Adrenal gland (tissue), 19 donors: ENCODE measurements at regions of chr10 and their contacts with region 1.

Region 1: DNA sequence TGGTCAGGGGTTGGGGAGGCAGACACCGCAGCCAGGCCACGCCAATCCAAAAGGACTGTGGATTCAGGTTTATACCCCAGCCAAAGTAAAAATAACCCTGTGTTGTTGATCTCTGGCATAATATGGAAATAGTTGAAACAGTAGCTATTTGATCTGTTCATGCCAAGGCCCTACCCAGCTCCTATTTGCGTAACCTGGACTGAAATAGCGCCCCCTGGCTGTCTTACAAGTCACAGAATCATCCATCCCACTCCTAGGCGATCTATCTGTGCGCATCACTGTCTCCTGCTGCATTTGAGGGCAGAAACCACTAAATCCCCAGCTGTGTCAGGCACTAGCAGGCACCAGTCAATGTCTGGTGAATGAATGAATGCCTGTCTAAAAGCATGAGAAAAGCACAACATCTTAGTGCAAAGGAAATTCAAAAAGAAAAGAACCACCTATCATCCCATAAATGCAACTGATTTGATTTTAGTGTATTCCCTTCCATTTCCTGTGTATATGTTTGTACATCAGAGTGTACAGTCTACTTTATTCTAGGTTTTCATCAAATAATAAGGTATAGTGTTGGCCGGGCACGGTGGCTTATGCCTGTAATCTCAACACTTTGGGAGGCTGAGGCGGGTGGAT is 160.0 kb downstream of the SLIT1 start:
- DNase-seq: peak; percentile 49 to 85 (median 58)
- H3K4me3 ChIP-seq: no peak overlapping the region
- H3K27ac ChIP-seq: no peak overlapping the region
- H3K4me1 ChIP-seq: peaks cover 14 to 25% of the 10 kb centered on the region in 2 donors
- H3K27me3 ChIP-seq: no peaks in the 10 kb centered on the region
- CTCF ChIP-seq: peak; percentile 30 to 74 (median 62)
- POLR2A ChIP-seq: no peak

Region 2: DNA sequence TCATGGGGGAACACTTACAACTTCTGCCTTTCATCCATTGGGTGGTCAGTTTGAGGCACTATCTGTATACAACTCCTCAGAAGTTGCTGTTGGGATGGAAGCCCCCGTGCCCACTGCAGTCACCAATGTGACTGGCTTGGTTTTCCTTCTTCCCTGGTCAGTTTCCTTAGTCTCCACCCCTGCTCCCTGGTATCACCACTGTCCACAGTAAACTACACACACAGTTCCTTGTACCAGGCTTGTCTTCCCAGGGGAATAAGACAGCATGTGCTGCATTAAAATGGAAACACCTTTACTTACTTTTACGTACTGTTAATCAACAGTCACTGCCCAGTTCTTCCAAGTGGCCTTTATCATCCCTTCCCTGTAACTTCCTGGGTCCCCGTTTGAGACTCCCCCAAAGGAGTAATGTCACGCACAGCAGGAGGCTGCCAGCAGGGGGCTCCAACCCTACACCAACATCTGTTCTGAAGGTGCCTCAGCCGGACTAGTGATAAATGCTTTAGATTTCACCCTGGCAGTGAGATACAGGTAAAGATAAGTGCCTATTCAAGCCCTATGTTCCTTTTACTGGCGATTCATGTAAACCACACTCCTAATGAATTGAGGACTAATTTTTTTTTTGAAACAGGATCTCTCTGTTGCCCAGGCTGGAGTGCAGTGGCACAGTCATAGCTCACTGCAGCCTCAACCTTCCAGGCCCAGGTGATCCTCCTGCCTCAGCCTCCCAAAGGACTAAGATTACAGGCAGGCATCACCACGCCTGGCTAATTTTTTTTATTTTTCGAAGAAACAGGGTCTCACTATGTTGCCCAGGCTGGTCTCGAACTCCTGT is 260.1 kb before region 1 on chr10:
- intact Hi-C with region 1: loop called (anchors 10 kb)
- DNase-seq: peak; percentile 58 to 83 (median 73)
- H3K4me3 ChIP-seq: no peak overlapping the region
- H3K27ac ChIP-seq: no peak overlapping the region
- H3K4me1 ChIP-seq: no peaks in the 10 kb centered on the region
- H3K27me3 ChIP-seq: no peaks in the 10 kb centered on the region
- CTCF ChIP-seq: peak; percentile 64 to 81 (median 76)
- POLR2A ChIP-seq: no peak

Region 3: DNA sequence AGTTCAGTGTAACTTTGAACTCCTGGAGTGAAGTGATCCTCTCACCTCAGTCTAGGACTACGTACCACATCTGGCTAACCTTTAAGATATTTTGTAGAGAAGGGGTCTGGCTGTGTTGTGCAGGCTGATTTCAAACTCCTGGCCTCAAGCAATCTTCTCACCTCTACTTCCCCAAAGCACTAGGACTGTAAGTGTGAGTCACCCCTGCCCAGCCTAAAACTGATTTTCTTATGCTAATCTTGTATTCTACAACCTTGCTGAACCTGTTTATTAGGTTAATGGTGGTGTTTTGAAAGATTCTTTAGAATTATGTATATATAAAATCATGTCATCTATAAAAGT is 135.6 kb before region 1 on chr10:
- intact Hi-C with region 1: no loop called
- DNase-seq: no peak
- H3K4me3 ChIP-seq: no peak overlapping the region
- H3K27ac ChIP-seq: no peak overlapping the region
- H3K4me1 ChIP-seq: peaks cover 0 to 12% of the 10 kb centered on the region in 2 donors
- H3K27me3 ChIP-seq: no peaks in the 10 kb centered on the region
- CTCF ChIP-seq: no peak
- POLR2A ChIP-seq: no peak

Region 4: DNA sequence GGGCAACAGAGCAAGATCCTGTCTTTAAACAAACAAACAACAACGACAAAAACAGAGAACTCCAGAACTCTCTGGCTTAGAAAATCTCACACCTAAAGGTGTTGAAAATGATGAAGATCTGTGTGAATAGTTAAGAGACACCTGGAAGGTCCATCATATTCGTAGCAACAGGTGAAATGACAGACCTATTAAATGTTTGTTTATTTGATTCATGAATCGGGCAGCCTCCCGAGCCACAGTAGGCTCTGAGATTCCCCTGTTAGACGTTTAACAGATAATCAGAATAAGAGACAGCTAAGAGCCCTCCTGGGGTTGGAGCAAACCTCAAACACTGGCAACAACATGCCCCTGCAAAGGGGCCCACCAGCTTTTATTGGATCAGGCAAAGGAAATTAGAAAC is 89.9 kb before region 1 on chr10:
- intact Hi-C with region 1: no loop called
- DNase-seq: no peak
- H3K4me3 ChIP-seq: no peak overlapping the region
- H3K27ac ChIP-seq: no peak overlapping the region
- H3K4me1 ChIP-seq: no peaks in the 10 kb centered on the region
- H3K27me3 ChIP-seq: no peaks in the 10 kb centered on the region
- CTCF ChIP-seq: no peak
- POLR2A ChIP-seq: no peak